ENCODE measurements at regions of chr17 and their contacts with region 1.

Region 1: GRCh38 chr17:2214047-2214928 is 89.3 kb downstream of the SMG6 start:
- DNase-seq: peak; percentile 93
- ATAC-seq: peak; percentile 76
- H3K4me3 ChIP-seq: peak overlapping the region; percentile 21
- H3K27ac ChIP-seq: peak overlapping the region; percentile 99
- H3K4me1 ChIP-seq: peaks cover 17% of the 10 kb centered on the region
- H3K27me3 ChIP-seq: no peaks in the 10 kb centered on the region
- CTCF ChIP-seq: no peak
- POLR2A ChIP-seq: no peak; the same call in 1 of the 2 replicates
- RAD21 ChIP-seq: peak; percentile 27; the same call in 1 of the 2 replicates

Region 2: DNA sequence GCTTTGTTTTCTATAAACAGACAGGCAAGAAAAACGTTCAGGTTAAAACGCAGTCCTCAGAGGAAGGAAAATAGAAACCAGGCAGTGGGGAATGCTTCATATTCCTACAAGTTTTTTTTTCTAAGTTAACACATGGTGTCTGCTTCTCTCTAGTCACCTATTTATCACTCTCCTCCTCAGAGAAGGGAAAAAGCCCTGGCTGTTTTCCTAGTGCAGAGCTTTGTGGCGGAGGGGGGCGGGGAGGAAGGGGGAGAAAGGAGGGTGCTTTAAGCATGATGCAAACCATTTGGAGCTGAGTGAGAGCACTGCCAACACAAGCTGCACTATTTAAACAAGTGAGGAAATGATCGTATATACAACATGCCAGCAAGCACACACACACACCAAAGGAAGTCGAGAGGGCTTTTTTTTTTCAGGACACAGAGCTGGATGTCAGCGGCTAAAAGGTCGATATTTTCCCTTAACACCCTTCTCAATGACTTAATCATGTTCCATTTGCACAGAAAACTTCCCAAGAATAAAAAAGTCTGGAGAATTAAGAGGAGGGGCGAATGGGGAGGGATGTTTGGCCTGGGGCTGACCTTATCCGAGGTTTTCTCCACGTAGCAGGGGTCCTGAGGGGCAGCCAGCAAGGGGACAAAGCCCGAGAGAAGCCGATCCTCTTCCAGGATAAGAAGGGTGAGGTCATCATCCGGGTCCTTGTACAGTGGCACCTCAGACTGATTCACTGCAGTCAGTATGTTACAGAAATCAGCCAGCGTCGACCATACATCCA is 42.0 kb before region 1 on chr17:
- CTCF ChIA-PET with region 1: no interaction called
- POLR2A ChIA-PET with region 1: interaction called, 7 read pairs
- dilution Hi-C with region 1: no loop called
- in situ Hi-C with region 1: no loop called
- intact Hi-C with region 1: loop called (anchors 1 kb)
- DNase-seq: peak; percentile 99
- ATAC-seq: peak; percentile 60
- H3K4me3 ChIP-seq: peak overlapping the region; percentile 15; the same call in 1 of the 2 replicates
- H3K27ac ChIP-seq: peak overlapping the region; percentile 99
- H3K4me1 ChIP-seq: peaks cover 50% of the 10 kb centered on the region
- H3K27me3 ChIP-seq: no peaks in the 10 kb centered on the region
- CTCF ChIP-seq: no peak
- POLR2A ChIP-seq: no peak; the same call in 1 of the 2 replicates
- RAD21 ChIP-seq: peak; percentile 40

Region 3: DNA sequence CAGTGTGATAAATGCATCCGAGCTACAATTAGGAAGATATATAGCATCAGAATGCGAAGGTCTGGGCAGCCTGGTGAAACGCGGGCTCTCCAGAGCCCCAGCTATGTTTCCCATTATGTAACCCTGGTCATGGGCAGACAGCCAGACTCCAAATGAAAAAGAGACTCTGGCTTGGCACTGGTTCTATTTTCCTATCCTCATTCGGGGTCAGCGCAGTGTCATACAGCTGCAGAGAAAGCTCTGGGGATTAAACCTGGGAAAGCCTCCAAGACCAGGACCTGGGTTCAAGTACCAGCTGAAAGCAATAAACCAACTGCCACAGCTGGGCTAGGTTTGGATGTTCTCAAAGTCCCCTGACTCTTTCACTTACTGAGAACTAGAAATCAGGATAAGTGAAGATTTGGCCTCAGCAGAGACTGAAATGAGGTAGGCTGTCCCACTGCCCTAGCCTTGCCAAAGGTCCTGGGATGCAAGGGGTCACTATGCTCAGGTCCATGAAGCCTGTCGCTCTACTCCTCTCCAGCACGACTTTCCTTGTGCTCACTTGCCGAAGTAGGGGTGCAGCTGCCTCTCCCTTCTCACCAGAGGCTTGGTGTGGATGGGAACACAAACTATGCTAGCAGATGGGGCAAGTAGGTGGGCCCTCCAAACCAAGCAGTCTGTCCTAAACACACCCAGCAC is 34.5 kb before region 1 on chr17:
- CTCF ChIA-PET with region 1: interaction called, 3 read pairs
- POLR2A ChIA-PET with region 1: interaction called, 7 read pairs
- dilution Hi-C with region 1: no loop called
- in situ Hi-C with region 1: no loop called
- intact Hi-C with region 1: loop called (anchors 1 kb)
- DNase-seq: peak; percentile 98
- ATAC-seq: peak; percentile 6
- H3K4me3 ChIP-seq: no peak overlapping the region
- H3K27ac ChIP-seq: peak overlapping the region; percentile 89
- H3K4me1 ChIP-seq: peaks cover 65% of the 10 kb centered on the region
- H3K27me3 ChIP-seq: no peaks in the 10 kb centered on the region
- CTCF ChIP-seq: no peak
- POLR2A ChIP-seq: no peak
- RAD21 ChIP-seq: no peak

Region 4: GRCh38 chr17:2192367-2193057 is 21.8 kb before region 1 on chr17:
- CTCF ChIA-PET with region 1: interaction called, 3 read pairs
- POLR2A ChIA-PET with region 1: no interaction called
- dilution Hi-C with region 1: no loop called
- in situ Hi-C with region 1: no loop called
- intact Hi-C with region 1: loop called (anchors 2 kb)
- DNase-seq: peak; percentile 99
- ATAC-seq: peak; percentile 86
- H3K4me3 ChIP-seq: no peak overlapping the region
- H3K27ac ChIP-seq: peak overlapping the region; percentile 67
- H3K4me1 ChIP-seq: peaks cover 16% of the 10 kb centered on the region
- H3K27me3 ChIP-seq: no peaks in the 10 kb centered on the region
- CTCF ChIP-seq: no peak; the same call in 1 of the 2 replicates
- POLR2A ChIP-seq: peak; percentile 69
- RAD21 ChIP-seq: peak; percentile 37

Region 5: DNA sequence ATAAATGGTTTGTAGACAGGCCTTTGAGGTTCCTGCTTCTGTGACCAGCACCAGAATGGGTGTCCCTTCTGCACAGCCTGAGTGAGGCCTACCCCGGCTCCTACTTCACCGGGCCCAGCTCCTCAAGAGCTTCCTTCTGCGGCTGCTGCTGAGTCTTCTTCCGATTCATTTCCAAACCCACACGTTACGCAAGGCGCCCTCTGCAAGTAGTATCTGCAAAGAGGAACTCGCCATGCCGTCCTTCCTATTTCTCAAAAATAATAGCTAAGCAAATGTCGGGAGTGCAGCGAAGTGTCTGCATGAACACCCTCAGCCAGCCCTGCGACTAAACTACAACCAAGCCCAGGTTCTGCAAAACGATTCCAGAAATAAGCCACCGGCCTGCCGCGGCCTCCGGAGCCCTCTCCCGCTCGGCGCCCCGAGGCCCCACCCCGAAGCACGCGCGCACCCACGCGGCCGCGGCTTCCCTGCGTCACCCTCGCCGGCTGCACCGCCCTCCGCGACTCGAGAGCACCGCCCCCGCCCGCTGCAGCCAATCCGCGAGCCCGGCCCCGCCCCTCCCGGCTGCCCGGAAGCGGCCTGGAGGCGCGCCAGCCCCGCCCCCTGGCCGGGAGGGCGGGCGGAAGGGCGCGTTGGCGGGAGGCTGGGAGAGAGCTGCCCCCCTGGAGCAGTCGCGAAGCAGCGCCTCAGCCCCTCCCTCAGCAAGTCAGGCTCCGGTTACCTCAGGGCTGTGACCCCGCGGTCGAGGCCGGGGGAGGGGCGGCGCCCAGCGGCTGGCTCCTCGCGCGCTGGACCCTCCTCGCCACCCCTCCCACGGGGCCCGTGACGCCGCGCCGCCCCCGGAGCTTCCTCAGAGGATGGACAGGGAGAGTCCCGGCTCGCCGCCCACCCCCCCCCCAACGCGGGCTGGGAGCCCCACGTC is 178.2 kb after region 1 on chr17:
- CTCF ChIA-PET with region 1: no interaction called
- POLR2A ChIA-PET with region 1: interaction called, 15 read pairs
- dilution Hi-C with region 1: no loop called
- in situ Hi-C with region 1: no loop called
- intact Hi-C with region 1: no loop called
- DNase-seq: peak; percentile 94
- ATAC-seq: peak; percentile 59
- H3K4me3 ChIP-seq: peak overlapping the region; percentile 61
- H3K27ac ChIP-seq: peak overlapping the region; percentile 98
- H3K4me1 ChIP-seq: peaks cover 31% of the 10 kb centered on the region
- H3K27me3 ChIP-seq: no peaks in the 10 kb centered on the region
- CTCF ChIP-seq: no peak
- POLR2A ChIP-seq: peak; percentile 65
- RAD21 ChIP-seq: no peak